ENCODE measurements at regions of chr15 and their contacts with region 1.

Region 1: DNA sequence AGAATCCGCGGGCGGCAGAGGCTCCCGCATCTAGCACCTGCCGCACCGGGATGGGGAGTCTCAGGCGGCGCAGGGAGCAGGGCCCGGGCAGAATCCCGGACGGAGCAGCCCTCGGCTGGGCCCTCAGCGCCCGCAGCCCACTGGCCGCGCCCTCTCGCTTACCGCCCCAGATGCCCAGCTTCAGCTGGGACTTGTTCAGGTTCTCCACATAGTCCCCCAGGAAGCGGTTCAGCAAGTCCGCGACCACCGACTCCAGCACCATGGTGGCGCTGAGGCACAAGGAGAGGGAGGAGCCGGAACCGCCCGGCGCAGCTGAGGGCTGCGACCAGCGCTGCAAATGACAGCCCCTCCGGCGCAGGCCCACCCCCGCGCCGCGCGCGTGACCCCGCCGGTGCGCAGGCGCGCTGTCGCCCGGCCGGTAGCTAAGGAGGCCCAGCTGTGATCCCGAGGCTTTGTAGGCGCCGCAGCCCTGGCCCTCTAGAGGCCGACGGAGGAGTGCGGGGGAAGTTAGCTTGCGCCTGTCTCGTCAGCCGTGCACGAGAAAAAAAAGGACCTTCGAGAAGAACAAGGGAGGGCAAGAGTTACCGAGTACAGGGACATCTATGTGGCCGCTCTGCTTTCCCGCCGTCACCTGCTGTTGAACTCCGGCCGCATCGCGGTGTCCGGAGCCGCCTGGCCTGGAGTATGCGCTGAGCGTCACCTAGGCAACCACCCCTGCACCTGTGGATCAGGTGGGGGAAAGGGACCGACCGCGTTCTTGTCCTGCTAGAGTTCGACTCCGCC is at the start of gene VPS13C:
- DNase-seq: peak; percentile 94 to 97
- ATAC-seq: peak; percentile 82 to 95 (median 89)
- H3K4me3 ChIP-seq: peak within 1 kb of the TSS; percentile 66
- H3K4me3 Mint-ChIP-seq: peak within 1 kb of the TSS; percentile 97
- H3K27ac ChIP-seq: peak within 1 kb of the TSS; percentile 87
- H3K27ac Mint-ChIP-seq: peak within 1 kb of the TSS; percentile 96 to 98
- H3K4me1 ChIP-seq: peaks cover 9% of the 10 kb centered on the region
- H3K4me1 Mint-ChIP-seq: peaks cover 47 to 61% of the 10 kb centered on the region in 2 donors
- H3K27me3 ChIP-seq: peaks cover 5% of the 10 kb centered on the region
- H3K27me3 Mint-ChIP-seq: peaks cover 11 to 21% of the 10 kb centered on the region in 2 donors
- CTCF ChIP-seq: peak; percentile 87
- total RNA-seq, gene VPS13C: 155 to 204 (median 164) TPM

Region 2: GRCh38 chr15:61857169-61857829 is 203.0 kb before region 1 on chr15:
- intact Hi-C with region 1: loop called (anchors 5 kb)
- DNase-seq: peak in 1 of 2 donors; percentile 72
- ATAC-seq: peak; percentile 91 to 92 (median 92)
- H3K4me3 ChIP-seq: peak overlapping the region; percentile 8
- H3K4me3 Mint-ChIP-seq: no peak overlapping the region
- H3K27ac ChIP-seq: peak overlapping the region; percentile 88
- H3K27ac Mint-ChIP-seq: no peak overlapping the region
- H3K4me1 ChIP-seq: peaks cover 4% of the 10 kb centered on the region
- H3K4me1 Mint-ChIP-seq: peaks cover 0 to 6% of the 10 kb centered on the region in 2 donors
- H3K27me3 ChIP-seq: no peaks in the 10 kb centered on the region
- H3K27me3 Mint-ChIP-seq: no peaks in the 10 kb centered on the region
- CTCF ChIP-seq: no peak

Region 3: DNA sequence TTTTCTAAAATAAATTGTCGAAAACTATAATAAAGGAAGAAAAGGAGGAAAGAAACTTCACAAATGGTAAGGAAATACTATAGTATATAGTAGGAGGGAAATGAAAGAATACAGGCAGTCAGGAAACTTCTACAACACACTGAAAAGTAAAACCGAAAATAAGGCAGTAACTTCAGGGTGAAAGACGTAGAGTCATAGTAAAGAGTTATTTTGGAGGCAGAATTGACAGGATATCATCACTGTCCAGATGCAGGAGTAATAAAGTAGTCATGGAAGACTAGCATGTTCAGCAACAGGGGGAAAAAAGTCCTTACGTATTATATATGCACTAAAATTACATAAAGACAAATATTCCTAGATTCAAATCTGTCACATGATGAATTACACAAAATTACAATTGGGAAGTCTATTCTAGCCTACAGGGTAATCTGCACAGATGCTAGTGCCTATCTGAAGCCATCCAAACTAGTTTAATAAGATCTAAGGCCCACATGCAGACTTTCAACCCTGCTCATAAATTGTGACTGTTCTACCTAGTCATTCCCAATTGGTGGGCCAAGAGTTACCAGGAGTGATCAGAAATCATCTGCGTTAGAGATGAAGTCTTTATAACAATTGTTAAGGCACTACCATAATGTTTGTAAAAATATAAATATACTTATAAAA is 14.1 kb before region 1 on chr15:
- intact Hi-C with region 1: loop called (anchors 1 kb)
- DNase-seq: no peak
- ATAC-seq: peak; percentile 75 to 88 (median 82)
- H3K4me3 ChIP-seq: no peak overlapping the region
- H3K4me3 Mint-ChIP-seq: peak overlapping the region; percentile 62
- H3K27ac ChIP-seq: peak overlapping the region; percentile 55
- H3K27ac Mint-ChIP-seq: peak overlapping the region; percentile 87 to 94
- H3K4me1 ChIP-seq: peaks cover 4% of the 10 kb centered on the region
- H3K4me1 Mint-ChIP-seq: peaks cover 27 to 40% of the 10 kb centered on the region in 2 donors
- H3K27me3 ChIP-seq: no peaks in the 10 kb centered on the region
- H3K27me3 Mint-ChIP-seq: no peaks in the 10 kb centered on the region
- CTCF ChIP-seq: no peak

Region 4: DNA sequence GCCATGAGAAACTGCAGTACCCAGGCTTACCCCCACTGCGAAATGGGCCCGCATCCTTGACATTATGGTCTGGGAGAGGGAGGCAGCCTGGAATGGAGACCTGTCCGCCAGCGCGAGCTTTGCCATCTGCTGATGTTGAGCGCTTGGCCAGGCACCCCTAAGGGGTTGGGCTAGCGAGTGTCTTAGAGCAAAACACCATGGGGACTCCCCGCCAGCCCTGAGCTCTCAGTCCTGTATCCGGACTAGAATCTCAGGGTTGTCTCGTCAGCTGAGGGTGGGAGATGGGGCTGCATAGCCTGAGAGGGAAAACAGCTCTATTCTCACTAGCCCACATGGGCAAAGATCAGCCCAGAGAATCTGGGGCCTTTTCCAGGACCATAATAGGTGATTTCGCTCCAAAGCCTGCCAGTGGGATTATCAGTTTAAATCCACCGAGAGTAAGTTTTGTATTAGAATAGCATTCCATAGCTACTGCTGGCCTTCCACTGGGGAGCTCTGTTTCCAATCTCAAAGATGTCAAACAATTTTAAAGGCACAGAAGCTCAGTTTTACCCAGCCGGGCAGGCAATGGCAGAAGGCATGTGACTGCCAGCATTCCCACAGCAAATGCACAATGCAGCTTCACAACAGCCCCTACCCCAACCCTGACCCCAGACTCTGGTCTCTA is 814.8 kb after region 1 on chr15:
- intact Hi-C with region 1: no loop called
- DNase-seq: no peak
- ATAC-seq: no peak
- H3K4me3 ChIP-seq: no peak overlapping the region
- H3K4me3 Mint-ChIP-seq: no peak overlapping the region
- H3K27ac ChIP-seq: no peak overlapping the region
- H3K27ac Mint-ChIP-seq: no peak overlapping the region
- H3K4me1 ChIP-seq: no peaks in the 10 kb centered on the region
- H3K4me1 Mint-ChIP-seq: peaks cover 0 to 7% of the 10 kb centered on the region in 2 donors
- H3K27me3 ChIP-seq: no peaks in the 10 kb centered on the region
- H3K27me3 Mint-ChIP-seq: peaks cover 3 to 28% of the 10 kb centered on the region in 2 donors
- CTCF ChIP-seq: no peak

Measured in natural killer cell (primary cell).